Activated T-helper 1 cell treated with anti-CD3 and anti-CD28 coated beads, Interleukin-12 subunit alpha, Interleukin-12 subunit beta, Interleukin-2, Interleukin-4 antibody, amounts not matched to agents 30 ng/mL and 10 ng/mL and 1 ng/mL, durations not matched to agents 14 hours and 24 hours and 36 hours (primary cell): ENCODE measurements at regions of chr2 and their contacts with region 1.

Region 1: GRCh38 chr2:25951071-25951547 is 31.2 kb downstream of the KIF3C start:
- DNase-seq: peak; percentile 50
- H3K4me3 Mint-ChIP-seq: no peak overlapping the region
- H3K27ac Mint-ChIP-seq: peak overlapping the region; percentile 37
- H3K4me1 Mint-ChIP-seq: peaks cover 5% of the 10 kb centered on the region
- H3K27me3 Mint-ChIP-seq: peaks cover 2% of the 10 kb centered on the region

Region 2: DNA sequence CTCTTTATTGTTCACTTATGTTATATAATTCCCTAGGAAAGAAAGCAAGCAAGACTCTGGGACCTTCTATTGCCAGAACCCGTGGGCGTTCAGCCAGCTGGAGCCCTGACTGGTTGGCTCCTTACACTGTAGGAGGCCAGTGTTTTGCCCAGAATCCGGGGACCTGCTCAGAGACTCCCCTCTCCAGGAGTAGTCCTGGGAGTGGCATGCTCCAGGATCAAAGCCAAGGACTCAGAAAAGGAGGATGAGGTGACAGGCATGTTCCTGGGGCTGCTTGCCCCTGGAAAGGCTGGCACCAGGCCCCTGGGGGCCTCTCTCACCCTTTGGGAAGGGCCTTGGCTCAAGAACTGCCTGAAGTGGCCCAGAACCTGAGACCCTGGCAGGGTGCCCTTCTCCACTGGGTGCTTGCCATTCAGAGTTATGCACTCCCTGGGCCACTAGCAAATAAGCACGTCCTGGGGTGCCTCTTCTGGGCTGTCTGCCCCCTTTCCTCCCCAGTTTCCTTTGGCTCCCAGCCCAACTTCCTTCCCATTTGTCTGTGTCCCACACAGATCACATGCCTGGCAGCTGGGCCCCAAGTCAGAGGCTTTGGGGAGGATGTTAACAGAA is 50.7 kb after region 1 on chr2:
- intact Hi-C with region 1: no loop called
- DNase-seq: no peak
- H3K4me3 Mint-ChIP-seq: no peak overlapping the region
- H3K27ac Mint-ChIP-seq: no peak overlapping the region
- H3K4me1 Mint-ChIP-seq: no peaks in the 10 kb centered on the region
- H3K27me3 Mint-ChIP-seq: peaks cover 7% of the 10 kb centered on the region

Region 3: DNA sequence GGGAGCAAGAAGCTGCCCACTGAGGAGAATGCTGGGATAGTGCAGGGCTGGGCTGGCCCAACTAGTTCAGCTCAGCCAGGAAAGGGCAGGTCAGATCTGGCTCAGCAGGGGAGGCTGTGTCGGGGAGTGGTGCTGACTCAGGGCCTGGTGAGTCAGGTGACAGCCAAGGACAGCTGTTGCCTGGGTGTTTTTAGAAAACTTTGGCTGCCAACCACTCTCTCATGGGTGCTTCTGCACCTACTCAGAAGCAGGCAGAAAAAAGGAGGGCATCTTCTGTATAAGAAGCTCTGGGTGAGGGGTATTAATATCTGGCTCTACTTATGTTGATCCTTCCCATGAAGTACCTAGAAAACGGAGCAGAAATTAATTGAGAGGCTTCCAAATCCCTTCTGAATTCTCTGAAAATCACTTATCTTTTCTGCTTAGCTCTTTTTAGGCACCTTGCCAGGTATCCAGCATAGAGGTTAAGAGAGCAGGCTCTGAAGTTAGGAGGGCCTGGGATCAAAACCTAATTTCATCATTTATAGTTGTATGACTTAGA is 67.1 kb after region 1 on chr2:
- intact Hi-C with region 1: no loop called
- DNase-seq: no peak
- H3K4me3 Mint-ChIP-seq: no peak overlapping the region
- H3K27ac Mint-ChIP-seq: no peak overlapping the region
- H3K4me1 Mint-ChIP-seq: peaks cover 9% of the 10 kb centered on the region
- H3K27me3 Mint-ChIP-seq: peaks cover 4% of the 10 kb centered on the region

Region 4: GRCh38 chr2:26144953-26145680 is 194.0 kb after region 1 on chr2:
- intact Hi-C with region 1: loop called (anchors 1 kb)
- DNase-seq: peak; percentile 43
- H3K4me3 Mint-ChIP-seq: no peak overlapping the region
- H3K27ac Mint-ChIP-seq: no peak overlapping the region
- H3K4me1 Mint-ChIP-seq: no peaks in the 10 kb centered on the region
- H3K27me3 Mint-ChIP-seq: peaks cover 7% of the 10 kb centered on the region

Region 5: GRCh38 chr2:26469092-26469710 is 518.1 kb after region 1 on chr2:
- intact Hi-C with region 1: loop called (anchors 1 kb)
- DNase-seq: peak; percentile 37
- H3K4me3 Mint-ChIP-seq: no peak overlapping the region
- H3K27ac Mint-ChIP-seq: no peak overlapping the region
- H3K4me1 Mint-ChIP-seq: no peaks in the 10 kb centered on the region
- H3K27me3 Mint-ChIP-seq: no peaks in the 10 kb centered on the region